ENCODE measurements at regions of chr10 and their contacts with region 1.

Region 1: GRCh38 chr10:24642622-24643417 is 80.9 kb downstream of the ARHGAP21 start:
- DNase-seq: no peak
- H3K4me3 ChIP-seq: no peak overlapping the region
- H3K27ac ChIP-seq: no peak overlapping the region
- H3K4me1 ChIP-seq: peaks cover 0 to 5% of the 10 kb centered on the region in 2 donors
- H3K27me3 ChIP-seq: no peaks in the 10 kb centered on the region
- CTCF ChIP-seq: peak in 4 of 6 experiments; percentile 40 to 68 (median 62)
- POLR2A ChIP-seq: no peak

Region 2: GRCh38 chr10:24724381-24725228 is 81.8 kb after region 1 on chr10:
- intact Hi-C with region 1: loop called (anchors 10 kb)
- DNase-seq: peak; percentile 99
- H3K4me3 ChIP-seq: peak overlapping the region; percentile 8 to 77 (median 27)
- H3K27ac ChIP-seq: peak overlapping the region; percentile 78 to 97 (median 96)
- H3K4me1 ChIP-seq: peaks cover 12 to 21% of the 10 kb centered on the region in 2 donors
- H3K27me3 ChIP-seq: no peaks in the 10 kb centered on the region
- CTCF ChIP-seq: no peak
- POLR2A ChIP-seq: peak; percentile 54 to 98

Region 3: DNA sequence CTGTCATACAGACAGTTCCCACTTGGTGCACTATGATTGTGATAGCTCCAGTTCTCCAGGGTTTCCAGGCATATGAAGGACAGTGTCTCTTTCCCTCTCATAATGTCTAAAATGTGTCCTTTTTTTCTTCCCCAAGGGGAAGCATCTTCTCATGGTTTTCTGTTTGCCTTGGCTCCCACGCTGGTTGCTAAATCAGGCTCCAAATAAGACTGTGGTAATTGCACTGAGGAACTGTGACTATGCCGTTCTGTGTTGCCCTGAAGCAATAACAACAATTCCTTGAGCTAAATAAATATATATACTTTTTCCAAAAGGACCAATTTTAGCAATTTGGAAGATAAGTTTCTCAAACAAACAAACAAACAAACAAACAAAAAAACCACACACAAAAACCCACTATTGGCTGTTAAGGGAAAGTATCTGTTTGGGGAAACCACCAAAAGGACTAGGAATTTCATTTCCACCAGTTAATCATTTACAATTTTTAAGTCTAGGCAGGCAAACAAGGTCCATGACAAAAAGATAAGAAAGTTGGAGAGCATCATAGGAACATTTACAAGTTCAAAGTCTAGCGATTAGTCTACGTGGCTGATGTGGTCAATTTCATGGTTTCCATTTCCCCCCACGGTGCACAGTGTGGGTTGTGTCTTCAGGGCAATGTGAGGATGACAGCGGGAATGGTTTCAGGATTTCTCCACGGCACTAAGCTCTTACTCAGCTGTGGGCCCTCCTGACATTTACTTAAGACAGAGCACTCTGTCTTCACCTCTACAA is 436.0 kb after region 1 on chr10:
- intact Hi-C with region 1: loop called (anchors 10 kb)
- DNase-seq: no peak
- H3K4me3 ChIP-seq: no peak overlapping the region
- H3K27ac ChIP-seq: no peak overlapping the region
- H3K4me1 ChIP-seq: peaks cover 26 to 35% of the 10 kb centered on the region in 2 donors
- H3K27me3 ChIP-seq: no peaks in the 10 kb centered on the region
- CTCF ChIP-seq: no peak
- POLR2A ChIP-seq: no peak